ENCODE measurements at regions of chr11 and their contacts with region 1.

Region 1: DNA sequence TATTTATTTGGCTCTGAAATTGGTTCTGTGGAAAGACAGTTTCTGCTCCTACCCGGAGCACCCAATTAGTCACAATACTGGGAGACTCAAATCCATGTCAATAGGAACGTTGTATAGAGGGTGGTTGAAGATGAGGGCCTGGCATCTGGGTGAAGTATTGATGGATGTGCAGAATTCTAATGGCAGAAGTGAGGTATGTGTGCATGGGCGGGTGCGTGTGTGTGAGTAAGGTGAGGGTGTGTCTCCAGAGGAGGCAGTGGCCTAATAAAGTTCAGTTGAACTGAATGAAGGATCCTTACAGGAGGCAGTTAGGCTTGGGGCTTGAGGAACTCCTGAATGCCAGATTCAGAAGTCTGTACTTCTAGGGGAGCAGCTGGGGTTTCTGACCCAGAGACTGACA is 71.8 kb upstream of the B3GAT1 start:
- DNase-seq: no peak
- ATAC-seq: no peak

Region 2: GRCh38 chr11:134393638-134394037 is 90.2 kb before region 1 on chr11:
- intact Hi-C with region 1: no loop called
- DNase-seq: no peak
- ATAC-seq: peak; percentile 50

Region 3: GRCh38 chr11:134464981-134465730 is 18.7 kb before region 1 on chr11:
- intact Hi-C with region 1: loop called (anchors 1 kb)
- DNase-seq: no peak
- ATAC-seq: no peak

Region 4: GRCh38 chr11:134615041-134615615 is 131.3 kb after region 1 on chr11:
- intact Hi-C with region 1: no loop called
- DNase-seq: no peak
- ATAC-seq: no peak

Measured in sciatic nerve (tissue), 2 donors.